HEK293 (cell line): ENCODE measurements at regions of chr6 and their contacts with region 1.

Region 1: DNA sequence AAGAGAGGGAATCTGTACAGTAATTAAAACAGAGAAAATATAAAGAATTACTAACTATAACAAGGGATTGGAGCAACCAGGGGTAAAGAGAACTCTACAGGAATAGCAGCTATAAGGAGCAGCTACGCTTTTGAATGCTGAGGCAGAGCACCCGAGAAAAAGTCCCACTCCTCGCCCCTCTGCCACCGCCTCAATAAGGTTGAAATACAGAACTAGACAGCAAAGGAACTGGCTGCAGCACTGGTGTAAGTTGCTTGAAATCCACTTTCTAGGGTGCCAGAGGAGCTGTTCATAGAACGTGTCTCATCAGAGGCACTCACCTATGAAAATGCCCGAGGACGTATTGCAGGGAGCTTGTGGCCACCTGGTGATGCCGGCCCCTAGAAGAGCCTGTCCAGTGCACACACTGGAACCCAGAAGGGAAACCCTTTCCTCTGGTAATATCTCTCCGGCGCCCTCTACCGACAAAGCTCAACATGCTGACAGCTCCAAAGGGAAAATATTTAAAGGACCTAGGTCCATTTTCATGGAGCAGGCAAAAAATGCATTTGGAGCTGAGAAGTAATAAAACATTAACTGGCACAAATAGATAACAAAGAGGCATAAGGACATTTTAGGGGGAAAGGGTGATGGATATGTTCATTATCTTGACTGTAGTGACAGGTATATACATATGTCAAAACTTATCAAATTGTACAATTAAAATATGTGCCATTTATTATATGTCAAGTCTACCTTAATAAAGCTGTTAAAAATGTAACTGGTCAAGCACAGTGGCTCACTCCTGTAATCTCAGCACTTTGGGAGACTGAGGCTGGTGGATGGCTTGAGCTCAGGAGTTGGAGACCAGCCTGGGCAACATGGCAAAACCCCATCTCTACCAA is 137.4 kb upstream of the HDAC2 start:
- H3K4me3 ChIP-seq: no peak overlapping the region
- H3K27ac ChIP-seq: no peak overlapping the region
- H3K4me1 ChIP-seq: no peaks in the 10 kb centered on the region
- CTCF ChIP-seq: no peak

Region 2: GRCh38 chr6:113994918-113995342 is 113.4 kb before region 1 on chr6:
- CTCF ChIA-PET with region 1: interaction called, 215 read pairs
- POLR2A ChIA-PET with region 1: interaction called, 11 read pairs
- H3K4me3 ChIP-seq: no peak overlapping the region
- H3K27ac ChIP-seq: no peak overlapping the region
- H3K4me1 ChIP-seq: peaks cover 7% of the 10 kb centered on the region; the same call in 1 of the 2 replicates
- CTCF ChIP-seq: peak; percentile 94

Region 3: GRCh38 chr6:114096561-114097172 is 11.7 kb before region 1 on chr6:
- CTCF ChIA-PET with region 1: interaction called, 69 read pairs
- POLR2A ChIA-PET with region 1: no interaction called
- H3K4me3 ChIP-seq: no peak overlapping the region
- H3K27ac ChIP-seq: no peak overlapping the region
- H3K4me1 ChIP-seq: no peaks in the 10 kb centered on the region
- CTCF ChIP-seq: no peak

Region 4: GRCh38 chr6:114125576-114125975 is 17.2 kb after region 1 on chr6:
- CTCF ChIA-PET with region 1: interaction called, 13 read pairs
- POLR2A ChIA-PET with region 1: no interaction called
- H3K4me3 ChIP-seq: no peak overlapping the region
- H3K27ac ChIP-seq: no peak overlapping the region
- H3K4me1 ChIP-seq: no peaks in the 10 kb centered on the region
- CTCF ChIP-seq: no peak

Region 5: DNA sequence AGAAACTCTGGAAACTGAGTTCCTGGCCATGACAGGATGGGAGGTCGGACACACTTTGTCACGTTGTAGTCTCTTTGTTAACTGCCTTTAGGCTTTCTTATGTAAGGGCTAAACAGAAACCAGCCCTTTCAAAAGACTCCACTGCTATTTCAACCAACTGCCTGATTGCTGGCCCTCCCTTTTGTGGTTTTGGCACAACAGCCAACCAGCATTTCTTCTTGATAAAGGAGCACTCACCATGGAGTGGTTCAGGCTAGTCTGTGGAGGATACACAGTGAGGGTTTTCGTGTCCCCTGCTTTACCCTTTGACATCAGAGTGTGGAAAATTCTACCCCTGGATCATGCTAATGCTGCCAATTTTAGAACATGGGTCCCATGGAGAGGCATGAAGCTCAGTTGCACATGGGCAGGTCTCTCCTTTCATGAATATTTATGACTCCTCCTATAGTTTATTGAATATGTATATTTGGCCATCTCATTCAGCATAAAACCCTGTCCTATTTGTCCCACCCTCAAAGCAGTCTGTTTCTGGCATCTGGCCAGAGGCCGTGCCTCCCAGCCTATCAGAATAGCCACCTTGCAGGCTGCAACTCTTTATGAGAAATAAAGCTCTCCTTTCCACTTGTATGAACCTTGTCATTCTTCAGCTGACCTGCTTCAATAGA is 86.1 kb after region 1 on chr6:
- CTCF ChIA-PET with region 1: interaction called, 10 read pairs
- POLR2A ChIA-PET with region 1: no interaction called
- H3K4me3 ChIP-seq: no peak overlapping the region
- H3K27ac ChIP-seq: no peak overlapping the region
- H3K4me1 ChIP-seq: peaks cover 5% of the 10 kb centered on the region
- CTCF ChIP-seq: no peak